Right lobe of liver (tissue), 6 donors: ENCODE measurements at regions of chr14 and their contacts with region 1.

Region 1: DNA sequence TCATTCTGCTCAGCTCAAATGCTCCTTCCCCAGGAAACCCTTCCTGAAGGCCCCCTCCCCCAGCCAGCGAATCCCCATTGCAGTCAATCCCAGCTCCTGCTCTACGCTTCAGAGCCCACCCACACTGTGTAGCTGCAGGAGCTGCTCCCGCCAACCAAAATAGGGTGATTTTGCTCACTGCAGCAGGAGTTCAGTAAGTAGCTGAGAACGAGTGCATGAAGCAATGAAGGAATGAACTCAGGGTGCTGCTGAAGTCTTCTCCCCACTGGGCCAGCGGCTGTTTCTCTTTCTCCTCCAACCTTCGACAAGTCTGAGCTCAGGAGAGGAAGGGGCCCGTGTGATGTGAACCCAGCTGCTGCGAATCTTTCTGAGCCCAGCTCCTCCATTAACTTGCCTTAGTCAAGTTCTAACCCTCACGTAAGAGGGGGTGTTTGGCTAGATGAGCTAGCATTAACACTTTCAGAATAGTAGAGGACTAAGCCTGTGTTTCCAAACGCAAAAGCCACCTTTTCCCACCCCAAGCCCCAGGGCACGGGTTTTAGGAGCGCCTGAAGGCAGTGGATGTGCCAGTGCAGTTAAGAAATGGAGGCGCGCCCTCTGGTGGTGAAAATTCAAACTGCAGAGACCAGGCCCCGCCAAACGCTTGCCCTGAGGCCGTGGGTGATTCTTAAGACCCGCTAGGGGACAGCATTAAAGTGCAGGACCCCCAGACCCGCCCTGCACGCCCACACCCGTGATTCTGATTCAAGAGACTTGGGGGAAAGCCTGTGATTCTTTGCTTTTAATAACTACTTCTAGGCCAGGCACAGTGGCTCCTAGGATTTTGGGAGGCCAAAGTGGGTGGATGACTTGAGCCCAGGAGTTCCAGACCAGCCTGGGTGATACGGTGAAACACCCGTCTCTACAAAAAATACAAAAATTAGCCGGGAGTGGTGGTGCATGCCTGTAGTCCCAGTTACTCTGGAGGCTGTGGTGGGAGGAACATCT is 11.9 kb upstream of the SERPINA4 start:
- DNase-seq: peak in 2 of 3 donors; percentile 46 to 65
- ATAC-seq: peak; percentile 75 to 87 (median 78)
- H3K4me3 ChIP-seq: no peak overlapping the region
- H3K27ac ChIP-seq: no peak overlapping the region
- H3K4me1 ChIP-seq: peaks cover 0 to 11% (median 5%) of the 10 kb centered on the region in 4 donors
- H3K27me3 ChIP-seq: no peaks in the 10 kb centered on the region
- CTCF ChIP-seq: peak; percentile 64 to 96 (median 88)
- POLR2A ChIP-seq: no peak

Region 2: GRCh38 chr14:94373708-94374107 is 175.6 kb before region 1 on chr14:
- intact Hi-C with region 1: no loop called
- DNase-seq: no peak
- ATAC-seq: no peak
- H3K4me3 ChIP-seq: no peak overlapping the region
- H3K27ac ChIP-seq: no peak overlapping the region
- H3K4me1 ChIP-seq: no peaks in the 10 kb centered on the region
- H3K27me3 ChIP-seq: no peaks in the 10 kb centered on the region
- CTCF ChIP-seq: no peak
- POLR2A ChIP-seq: no peak

Region 3: GRCh38 chr14:94423453-94424056 is 125.7 kb before region 1 on chr14:
- intact Hi-C with region 1: loop called in 1 of 2 experiments (anchors 10 kb)
- DNase-seq: peak; percentile 81 to 85 (median 84)
- ATAC-seq: peak; percentile 96 to 99 (median 98)
- H3K4me3 ChIP-seq: no peak overlapping the region
- H3K27ac ChIP-seq: no peak overlapping the region
- H3K4me1 ChIP-seq: peaks cover 0 to 1% (median 0%) of the 10 kb centered on the region in 4 donors
- H3K27me3 ChIP-seq: no peaks in the 10 kb centered on the region
- CTCF ChIP-seq: peak; percentile 59 to 73 (median 66)
- POLR2A ChIP-seq: no peak

Region 4: DNA sequence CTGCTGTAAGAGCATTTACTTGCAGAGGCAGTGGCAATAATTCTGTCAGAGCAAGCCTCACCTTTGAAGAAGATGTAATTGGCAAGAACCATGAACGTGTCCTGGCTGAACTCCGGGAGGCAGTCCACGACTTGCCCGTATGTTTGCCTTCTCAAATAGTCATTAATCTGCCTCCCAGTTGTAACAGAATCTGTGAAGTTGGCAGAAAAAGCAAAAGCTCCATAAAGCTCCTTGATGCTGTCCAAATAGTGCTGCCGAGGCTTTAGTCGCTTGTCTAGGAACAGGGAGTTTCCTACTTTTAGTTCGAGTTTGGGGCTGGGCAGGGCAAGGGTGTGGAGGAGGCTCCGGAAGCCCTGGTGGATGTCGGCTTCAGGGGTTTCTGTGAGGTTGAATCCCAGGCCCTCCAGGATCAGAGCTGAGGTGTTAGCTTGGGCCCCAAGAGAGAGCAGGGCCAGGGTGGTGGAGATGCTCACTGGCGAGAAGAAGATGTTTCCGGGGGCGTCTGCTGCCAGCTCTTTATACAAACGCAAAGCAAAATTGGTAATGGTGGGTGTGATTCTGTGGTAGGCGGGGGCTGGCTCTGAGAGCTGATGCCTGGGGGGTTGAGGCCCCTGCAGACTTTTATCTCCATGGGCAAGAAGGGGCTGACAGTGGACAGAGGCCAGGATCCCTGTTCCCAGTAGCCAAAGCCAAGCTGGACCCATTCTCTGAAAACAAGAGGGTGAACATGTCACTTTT is 101.1 kb before region 1 on chr14:
- intact Hi-C with region 1: loop called in 1 of 2 experiments (anchors 10 kb)
- DNase-seq: peak in 2 of 3 donors; percentile 62 to 68
- ATAC-seq: peak in 3 of 4 donors; percentile 8 to 34 (median 18)
- H3K4me3 ChIP-seq: no peak overlapping the region
- H3K27ac ChIP-seq: peak overlapping the region in 1 of 3 donors; percentile 63
- H3K4me1 ChIP-seq: peaks cover 0 to 41% (median 9%) of the 10 kb centered on the region in 4 donors
- H3K27me3 ChIP-seq: no peaks in the 10 kb centered on the region
- CTCF ChIP-seq: no peak
- POLR2A ChIP-seq: no peak